ENCODE measurements at regions of chr15 and their contacts with region 1.

Region 1: DNA sequence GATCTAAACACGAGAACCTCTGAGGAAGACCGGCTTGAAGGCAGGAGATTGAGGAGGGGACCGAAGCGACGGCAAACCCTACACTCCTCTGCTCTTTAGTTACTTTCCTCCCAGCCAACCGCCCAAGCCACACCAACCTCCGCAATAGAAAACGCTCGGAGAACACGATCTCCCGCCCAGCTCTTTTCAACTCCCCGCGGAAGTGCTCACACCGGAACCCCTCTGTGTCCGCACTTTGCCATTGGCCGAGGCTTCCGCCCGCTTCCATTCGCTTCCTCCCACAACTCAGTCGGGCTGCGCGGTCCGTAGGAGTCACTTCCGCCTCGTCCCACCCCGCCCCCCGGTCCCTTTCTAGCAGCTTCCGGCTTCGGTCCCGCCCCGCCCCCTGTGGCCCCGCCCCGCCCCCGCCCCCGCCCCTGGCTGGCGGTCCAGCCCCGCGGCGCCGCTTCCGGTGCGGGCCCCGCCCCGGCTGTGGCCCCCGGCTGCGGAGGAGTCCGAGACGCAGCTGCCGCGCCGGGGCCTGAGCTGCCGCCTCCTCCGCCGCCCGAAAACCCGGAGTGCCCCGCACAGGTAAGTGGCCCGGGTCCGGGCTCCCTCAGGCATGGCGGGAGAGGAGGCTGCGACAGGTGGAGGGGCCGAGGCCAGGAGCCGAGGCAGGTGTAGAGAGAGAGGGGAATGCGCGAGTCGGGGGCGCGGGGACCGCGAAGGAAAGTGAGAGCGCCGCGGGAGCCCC is at the start of gene ARID3B:
- DNase-seq: peak; percentile 93 to 97 (median 96)
- H3K4me3 ChIP-seq: peak within 1 kb of the TSS; percentile 49 to 98 (median 87)
- H3K27ac ChIP-seq: peak within 1 kb of the TSS in 51 of 59 donors; percentile 6 to 94 (median 79)
- H3K27me3 ChIP-seq: no peaks in the 10 kb centered on the region
- CTCF ChIP-seq: peak in 21 of 56 donors; percentile 8 to 47 (median 23)
- total RNA-seq, gene ARID3B: 2.4 to 9.2 (median 5.6) TPM

Region 2: DNA sequence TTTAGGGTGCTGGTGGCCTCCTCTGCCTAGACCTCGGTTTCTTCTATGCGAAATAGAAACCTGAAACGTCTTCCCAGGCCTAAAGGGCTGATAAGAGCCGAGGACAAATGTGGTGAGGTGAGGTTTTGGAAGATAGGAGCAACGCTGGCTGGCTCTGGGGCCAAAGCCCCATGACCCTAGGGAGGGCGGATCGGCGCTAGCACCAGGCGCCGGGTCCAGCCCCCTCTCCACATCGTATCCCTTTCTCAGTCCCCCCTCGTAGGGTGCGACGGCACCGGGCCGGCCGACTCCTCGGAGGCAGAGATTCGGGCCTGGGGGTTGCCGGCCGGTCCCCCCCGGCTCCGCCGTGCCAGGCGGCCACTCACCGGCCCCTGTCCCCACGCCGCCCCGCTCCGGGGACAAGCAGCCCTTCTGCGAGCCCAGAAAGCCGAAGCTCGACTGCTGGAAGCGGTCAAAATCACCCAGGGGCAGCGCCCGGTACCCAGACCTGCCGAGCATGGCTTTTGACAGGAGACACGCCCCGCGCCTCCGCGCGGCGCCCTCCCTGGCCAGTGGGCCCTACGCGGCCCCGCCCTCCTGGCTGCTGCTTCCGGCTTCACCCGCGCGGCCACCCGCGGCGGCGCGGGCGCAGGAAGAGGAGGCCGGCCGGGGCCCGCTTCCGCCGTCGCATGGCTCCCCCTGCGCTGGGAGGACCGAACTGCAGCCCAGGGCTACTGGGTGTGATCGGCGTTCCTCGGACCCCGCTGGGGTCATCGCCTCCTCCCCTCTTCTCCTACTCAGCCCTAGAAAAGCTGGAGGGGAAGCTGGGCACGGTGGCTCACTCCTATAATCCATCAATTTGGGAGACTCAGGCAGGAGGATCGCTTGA is 549.0 kb before region 1 on chr15 and contains the start of gene STOML1:
- intact Hi-C with region 1: loop called in 1 of 2 experiments (anchors 10 kb)
- DNase-seq: peak; percentile 74 to 93 (median 86)
- H3K4me3 ChIP-seq: peak within 1 kb of the TSS; percentile 66 to 99 (median 94)
- H3K27ac ChIP-seq: peak within 1 kb of the TSS in 58 of 59 donors; percentile 9 to 94 (median 84)
- H3K27me3 ChIP-seq: no peaks in the 10 kb centered on the region
- CTCF ChIP-seq: peak; percentile 88 to 99 (median 97)
- total RNA-seq, gene STOML1: 37.5 to 82.8 (median 57.6) TPM

Region 3: DNA sequence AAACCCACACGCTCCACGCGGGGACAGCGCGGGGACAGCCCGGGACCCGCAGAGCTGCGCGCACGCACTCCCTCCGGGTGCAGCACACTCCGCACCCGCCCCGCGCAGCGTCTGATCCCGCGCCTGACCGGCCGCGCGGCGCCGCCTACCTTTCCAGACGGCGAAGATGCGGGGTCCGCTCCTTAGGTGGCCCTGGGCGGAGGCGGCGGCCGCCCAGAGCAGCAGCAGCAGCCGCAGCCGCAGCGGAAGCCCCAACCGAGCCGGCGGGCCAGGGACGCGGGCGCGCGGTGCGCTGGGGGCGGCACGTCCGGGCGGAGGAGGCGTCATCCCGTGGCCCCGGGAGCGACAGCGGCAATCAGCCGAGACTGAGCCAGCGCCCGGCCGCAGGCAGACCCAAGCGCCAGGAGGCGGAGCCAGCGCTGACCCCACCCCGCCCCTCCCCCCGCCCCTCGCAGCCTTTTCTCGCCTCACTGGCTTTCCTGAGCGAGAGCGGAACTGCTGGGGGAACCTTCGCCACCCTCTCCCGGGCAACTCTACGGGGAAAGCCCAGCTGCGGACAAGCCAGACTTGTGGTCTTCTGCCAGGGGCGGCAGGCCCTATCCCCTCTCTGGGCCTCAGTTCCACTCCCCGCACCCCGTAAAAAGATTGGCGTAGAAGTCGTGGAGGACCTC is 107.2 kb before region 1 on chr15 and contains the start of gene SEMA7A:
- intact Hi-C with region 1: loop called in 1 of 2 experiments (anchors 10 kb)
- DNase-seq: peak; percentile 77 to 93 (median 86)
- H3K4me3 ChIP-seq: peak within 1 kb of the TSS; percentile 68 to 98 (median 88)
- H3K27ac ChIP-seq: peak within 1 kb of the TSS; percentile 78 to 100 (median 95)
- H3K27me3 ChIP-seq: no peaks in the 10 kb centered on the region
- CTCF ChIP-seq: peak in 33 of 56 donors; percentile 7 to 68 (median 24)
- total RNA-seq, gene SEMA7A: 34.1 to 116 (median 63.6) TPM

Region 4: GRCh38 chr15:74460871-74461846 is 79.8 kb before region 1 on chr15 and contains the start of gene UBL7:
- intact Hi-C with region 1: loop called (anchors 2 kb)
- DNase-seq: peak; percentile 95 to 99 (median 98)
- H3K4me3 ChIP-seq: peak within 1 kb of the TSS; percentile 42 to 98 (median 83)
- H3K27ac ChIP-seq: peak within 1 kb of the TSS in 58 of 59 donors; percentile 5 to 94 (median 83)
- H3K27me3 ChIP-seq: no peaks in the 10 kb centered on the region
- CTCF ChIP-seq: peak in 55 of 56 donors; percentile 27 to 78 (median 53)
- total RNA-seq, gene UBL7: 46.8 to 107 (median 78.1) TPM

Region 5: DNA sequence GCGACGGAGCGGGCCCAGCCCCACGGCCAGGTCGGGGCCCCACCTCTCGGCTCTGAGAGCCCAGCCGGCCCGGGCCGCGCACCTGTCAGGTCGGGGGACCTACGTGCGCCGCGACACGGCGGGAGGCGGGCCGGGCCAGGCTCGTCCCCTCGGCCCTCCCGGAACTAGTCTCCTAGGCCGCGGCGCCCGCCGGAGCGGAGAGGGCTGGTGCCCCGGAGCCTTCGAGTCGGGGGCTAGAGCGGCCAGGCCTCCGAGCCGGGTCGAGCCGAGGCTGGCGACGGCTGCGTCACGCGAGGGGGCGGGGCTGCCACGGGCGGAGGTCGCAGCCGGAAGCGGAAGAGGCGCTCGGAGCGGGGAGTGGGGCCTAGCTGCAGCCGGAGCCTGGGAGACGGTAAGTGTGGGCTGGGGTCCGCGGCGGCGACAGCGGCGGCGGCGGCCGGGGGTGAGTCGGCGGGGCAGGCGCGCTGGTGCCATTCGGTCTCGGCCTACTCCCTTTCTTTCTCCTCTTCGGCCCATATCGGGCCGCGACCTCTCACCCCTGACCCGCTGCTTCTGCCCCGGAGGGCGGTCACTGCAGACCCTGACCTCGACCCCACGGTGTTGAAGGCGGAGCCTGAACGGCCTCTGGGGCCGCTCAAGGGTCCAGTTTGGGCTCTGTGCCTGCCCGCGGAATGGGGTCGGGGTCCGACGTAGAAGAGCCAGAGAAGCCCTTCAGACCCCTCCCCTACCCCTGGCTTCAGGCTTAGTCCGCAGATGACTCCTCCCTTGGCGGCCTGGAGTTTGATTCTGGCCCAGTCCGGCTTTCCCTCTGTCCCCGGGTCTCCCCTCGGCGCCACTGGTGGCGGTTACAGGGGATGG is 74.8 kb after region 1 on chr15 and contains the start of gene CLK3:
- intact Hi-C with region 1: loop called (anchors 1 kb)
- DNase-seq: peak; percentile 80 to 99 (median 94)
- H3K4me3 ChIP-seq: peak within 1 kb of the TSS; percentile 65 to 100 (median 98)
- H3K27ac ChIP-seq: peak within 1 kb of the TSS; percentile 62 to 99 (median 96)
- H3K27me3 ChIP-seq: no peaks in the 10 kb centered on the region
- CTCF ChIP-seq: peak in 30 of 56 donors; percentile 7 to 56 (median 22)
- total RNA-seq, gene CLK3: 41.9 to 96.5 (median 63.3) TPM

Region 6: DNA sequence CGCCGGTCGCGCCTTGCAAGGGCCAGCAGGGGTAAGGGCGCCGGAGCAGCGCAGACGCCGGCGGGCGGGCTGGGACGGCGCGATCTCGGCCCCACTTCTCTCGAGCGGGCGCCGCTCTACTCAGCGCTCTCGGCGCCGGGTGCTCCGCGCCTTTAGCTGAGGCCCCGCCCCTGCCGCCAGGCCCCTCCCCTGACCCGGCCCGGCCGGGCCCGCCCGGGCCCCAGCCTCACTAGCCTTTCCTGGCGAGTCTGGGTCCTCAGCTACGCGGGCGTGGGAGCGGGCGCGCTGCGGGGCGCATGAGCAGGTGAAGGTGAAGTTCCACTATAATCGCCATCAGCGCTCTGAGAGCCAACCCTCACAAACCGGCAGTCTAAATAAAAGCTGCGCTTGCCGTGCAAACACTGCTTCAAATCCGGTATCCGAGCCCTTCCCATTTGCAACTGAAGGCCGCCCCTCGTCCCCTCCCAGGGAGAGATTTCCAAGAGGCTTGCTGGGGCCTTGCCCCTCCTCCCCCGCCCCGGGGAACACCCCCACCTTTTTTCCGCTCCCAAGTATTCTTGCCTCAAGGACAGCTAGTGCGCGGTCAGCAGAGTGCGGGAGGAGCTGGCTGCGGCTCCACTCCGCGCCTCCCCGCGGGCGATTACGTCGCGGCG is 415.8 kb after region 1 on chr15 and contains the start of gene RPP25:
- intact Hi-C with region 1: loop called in 1 of 2 experiments (anchors 10 kb)
- DNase-seq: peak; percentile 42 to 82 (median 59)
- H3K4me3 ChIP-seq: peak within 1 kb of the TSS; percentile 49 to 81 (median 67)
- H3K27ac ChIP-seq: peak within 1 kb of the TSS in 52 of 59 donors; percentile 10 to 84 (median 65)
- H3K27me3 ChIP-seq: peaks cover 0 to 20% (median 3%) of the 10 kb centered on the region in 45 donors
- CTCF ChIP-seq: no peak
- total RNA-seq, gene RPP25: 5.0 to 16.7 (median 8.5) TPM

Measured in dorsolateral prefrontal cortex (tissue), 120 donors.